PC-9 (cell line): ENCODE measurements at regions of chr1 and their contacts with region 1.

Region 1: GRCh38 chr1:196425513-196425912 is 182.7 kb downstream of the KCNT2 start:
- DNase-seq: no peak
- H3K4me3 ChIP-seq: no peak overlapping the region
- H3K27ac ChIP-seq: no peak overlapping the region
- H3K4me1 ChIP-seq: no peaks in the 10 kb centered on the region
- H3K27me3 ChIP-seq: no peaks in the 10 kb centered on the region
- CTCF ChIP-seq: no peak

Region 2: GRCh38 chr1:196128835-196129234 is 296.7 kb before region 1 on chr1:
- CTCF ChIA-PET with region 1: no interaction called
- POLR2A ChIA-PET with region 1: no interaction called
- intact Hi-C with region 1: no loop called
- DNase-seq: no peak
- H3K4me3 ChIP-seq: no peak overlapping the region
- H3K27ac ChIP-seq: no peak overlapping the region
- H3K4me1 ChIP-seq: no peaks in the 10 kb centered on the region
- H3K27me3 ChIP-seq: no peaks in the 10 kb centered on the region
- CTCF ChIP-seq: no peak

Region 3: DNA sequence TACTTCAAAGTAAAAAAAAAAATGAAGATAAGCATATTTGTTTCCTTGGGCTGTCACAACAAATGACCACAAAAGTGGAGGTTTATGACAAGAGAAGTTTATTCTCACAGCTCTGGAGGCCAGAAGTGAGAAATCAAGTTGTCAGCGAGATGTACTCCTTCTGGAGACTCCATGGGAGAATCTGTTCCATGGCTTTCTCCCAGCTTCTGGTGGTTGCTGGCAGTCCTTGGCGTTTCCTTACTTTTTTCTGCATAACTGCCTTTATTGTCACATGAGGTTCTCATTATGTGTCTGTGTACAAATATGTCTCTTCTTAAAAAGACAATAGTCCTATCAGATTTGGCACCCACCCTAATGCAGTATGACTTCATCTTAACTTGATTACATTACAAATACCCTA is 215.5 kb before region 1 on chr1:
- CTCF ChIA-PET with region 1: interaction called, 17 read pairs
- POLR2A ChIA-PET with region 1: no interaction called
- intact Hi-C with region 1: no loop called
- DNase-seq: no peak
- H3K4me3 ChIP-seq: no peak overlapping the region
- H3K27ac ChIP-seq: no peak overlapping the region
- H3K4me1 ChIP-seq: no peaks in the 10 kb centered on the region
- H3K27me3 ChIP-seq: no peaks in the 10 kb centered on the region
- CTCF ChIP-seq: no peak